Sigmoid colon (tissue), 7 donors: ENCODE measurements at regions of chr11 and their contacts with region 1.

Region 1: DNA sequence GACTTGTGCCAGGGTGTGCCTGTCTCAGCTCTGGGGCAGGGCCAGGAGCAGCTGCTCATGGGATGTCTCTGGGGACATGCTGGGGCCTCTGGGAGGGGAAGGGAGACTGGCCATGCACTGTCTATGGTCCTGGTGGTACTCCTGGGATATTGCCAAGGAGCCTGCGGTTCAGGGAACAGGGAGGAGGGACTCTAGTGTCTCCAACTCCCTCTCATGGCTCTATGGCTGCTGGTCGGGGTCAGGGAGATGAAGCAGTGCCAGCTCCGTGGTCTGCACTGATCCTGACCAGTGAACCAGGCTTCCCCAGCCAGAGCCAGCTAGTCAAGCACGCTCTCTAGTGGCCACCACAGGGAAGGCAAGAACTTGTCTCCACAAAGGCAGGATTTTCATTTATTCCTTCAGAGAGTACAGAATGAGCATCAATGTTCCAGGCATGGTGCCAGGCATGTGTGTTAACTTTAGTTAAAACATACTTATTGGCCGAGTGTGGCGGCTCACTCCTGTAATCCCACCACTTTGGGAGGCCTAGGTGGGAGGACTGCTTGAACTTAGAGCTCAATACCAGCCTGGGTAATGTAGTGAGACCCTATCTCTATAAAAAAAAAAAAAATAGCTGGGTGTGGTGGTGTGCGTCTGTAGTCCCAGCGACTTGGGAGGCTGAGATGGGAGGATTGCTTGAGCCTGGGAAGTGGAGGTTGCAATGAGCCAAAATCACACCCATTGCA is 2.5 kb upstream of the BEST1 start:
- DNase-seq: peak; percentile 95
- H3K4me3 ChIP-seq: no peak overlapping the region
- H3K27ac ChIP-seq: no peak overlapping the region
- H3K4me1 ChIP-seq: peaks cover 0 to 31% (median 22%) of the 10 kb centered on the region in 4 donors
- H3K27me3 ChIP-seq: no peaks in the 10 kb centered on the region
- CTCF ChIP-seq: peak; percentile 78 to 92 (median 86)
- EP300 ChIP-seq: no peak
- POLR2A ChIP-seq: no peak

Region 2: DNA sequence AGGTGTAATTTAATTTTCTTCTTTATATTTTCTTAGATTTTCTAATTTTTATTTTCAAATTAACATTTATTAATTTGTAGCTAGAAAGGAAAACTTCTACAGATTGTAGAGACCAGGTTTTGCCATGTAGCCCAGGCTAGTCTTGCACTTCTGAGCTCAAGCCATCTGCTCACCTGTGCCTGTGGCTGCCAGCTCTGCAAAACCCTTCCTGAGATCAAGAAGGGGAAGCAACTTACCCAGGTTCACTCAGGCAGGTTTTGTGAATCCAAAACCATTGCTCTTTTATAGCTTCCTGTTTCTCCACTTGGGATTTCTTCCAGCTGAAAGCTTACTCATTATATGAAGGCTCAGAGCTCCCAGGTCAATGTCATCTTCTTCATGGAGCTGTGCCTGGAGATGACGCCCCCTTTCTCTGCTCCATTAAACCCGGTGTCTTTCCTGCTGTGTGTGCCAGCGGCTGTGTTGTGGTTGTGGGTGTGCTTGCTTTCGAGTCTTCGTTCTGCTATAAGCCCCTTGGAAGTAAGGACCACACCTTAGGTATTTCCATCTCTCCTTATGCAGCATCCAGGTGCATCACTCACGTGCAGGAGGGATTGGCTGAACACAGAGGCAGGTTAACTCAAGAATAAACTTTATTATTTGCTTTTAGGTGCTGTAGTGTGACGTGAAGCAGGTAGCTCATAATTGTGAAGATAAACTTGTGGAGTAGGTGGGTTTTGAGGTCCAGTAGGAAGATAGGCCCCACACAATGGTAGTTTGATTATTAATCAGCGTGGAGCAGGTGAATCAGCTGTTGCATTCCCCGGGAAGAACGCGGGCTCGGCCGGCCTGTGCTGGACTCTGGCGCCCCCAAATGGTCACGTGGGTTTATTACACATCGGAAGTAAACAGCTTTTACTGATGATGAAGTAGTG is 134.0 kb after region 1 on chr11:
- intact Hi-C with region 1: loop called (anchors 1 kb)
- DNase-seq: peak; percentile 89
- H3K4me3 ChIP-seq: no peak overlapping the region
- H3K27ac ChIP-seq: peak overlapping the region in 1 of 4 donors; percentile 11
- H3K4me1 ChIP-seq: peaks cover 0 to 6% (median 3%) of the 10 kb centered on the region in 4 donors
- H3K27me3 ChIP-seq: no peaks in the 10 kb centered on the region
- CTCF ChIP-seq: peak; percentile 85 to 92 (median 87)
- EP300 ChIP-seq: no peak
- POLR2A ChIP-seq: no peak